ENCODE measurements at regions of chr21 and their contacts with region 1.

Region 1: DNA sequence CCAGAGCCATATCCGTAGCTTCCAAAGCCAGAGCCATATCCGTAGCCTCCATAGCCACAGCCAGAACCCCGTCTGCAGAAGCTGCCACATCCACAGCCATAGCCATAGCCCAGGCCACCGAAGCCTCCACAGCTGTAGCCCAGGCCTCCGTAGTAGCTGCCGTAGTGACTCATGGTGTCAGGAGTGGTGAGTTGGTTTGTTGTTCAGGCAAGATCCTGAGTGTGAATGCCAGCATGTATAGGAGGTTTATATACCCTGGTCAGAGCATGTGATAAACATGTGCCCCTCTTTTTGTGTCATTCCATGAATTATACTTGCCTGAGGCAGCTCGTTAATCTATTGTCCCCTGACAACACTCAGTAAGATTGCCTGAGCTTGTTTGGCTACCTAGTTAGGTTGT is at the start of gene KRTAP19-1:
- DNase-seq: no peak
- ATAC-seq: no peak
- total RNA-seq, gene KRTAP19-1: not detected

Region 2: GRCh38 chr21:29449306-29449950 is 1030.7 kb before region 1 on chr21:
- intact Hi-C with region 1: no loop called
- DNase-seq: no peak
- ATAC-seq: no peak

Region 3: DNA sequence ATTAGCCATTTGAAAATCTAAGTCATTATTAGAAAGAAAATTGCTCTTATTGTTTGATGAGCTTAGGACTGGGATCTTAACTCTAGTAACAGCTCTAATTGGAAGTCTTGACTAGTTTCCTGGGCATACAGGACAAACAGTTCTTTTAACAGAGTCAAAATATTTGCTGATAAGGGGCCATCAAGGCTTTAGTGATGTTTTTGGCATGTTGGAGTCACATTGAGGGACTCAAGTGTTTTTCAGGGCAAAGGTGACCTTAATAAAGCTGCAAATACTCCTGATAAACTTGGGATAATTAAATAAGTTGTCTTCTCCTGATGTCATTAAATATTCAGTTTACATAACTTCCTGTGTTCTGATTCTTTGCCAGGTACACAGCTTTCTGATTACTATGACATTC is 87.5 kb after region 1 on chr21:
- intact Hi-C with region 1: loop called (anchors 5 kb)
- DNase-seq: no peak
- ATAC-seq: no peak